ENCODE measurements at regions of chr7 and their contacts with region 1.

Region 1: DNA sequence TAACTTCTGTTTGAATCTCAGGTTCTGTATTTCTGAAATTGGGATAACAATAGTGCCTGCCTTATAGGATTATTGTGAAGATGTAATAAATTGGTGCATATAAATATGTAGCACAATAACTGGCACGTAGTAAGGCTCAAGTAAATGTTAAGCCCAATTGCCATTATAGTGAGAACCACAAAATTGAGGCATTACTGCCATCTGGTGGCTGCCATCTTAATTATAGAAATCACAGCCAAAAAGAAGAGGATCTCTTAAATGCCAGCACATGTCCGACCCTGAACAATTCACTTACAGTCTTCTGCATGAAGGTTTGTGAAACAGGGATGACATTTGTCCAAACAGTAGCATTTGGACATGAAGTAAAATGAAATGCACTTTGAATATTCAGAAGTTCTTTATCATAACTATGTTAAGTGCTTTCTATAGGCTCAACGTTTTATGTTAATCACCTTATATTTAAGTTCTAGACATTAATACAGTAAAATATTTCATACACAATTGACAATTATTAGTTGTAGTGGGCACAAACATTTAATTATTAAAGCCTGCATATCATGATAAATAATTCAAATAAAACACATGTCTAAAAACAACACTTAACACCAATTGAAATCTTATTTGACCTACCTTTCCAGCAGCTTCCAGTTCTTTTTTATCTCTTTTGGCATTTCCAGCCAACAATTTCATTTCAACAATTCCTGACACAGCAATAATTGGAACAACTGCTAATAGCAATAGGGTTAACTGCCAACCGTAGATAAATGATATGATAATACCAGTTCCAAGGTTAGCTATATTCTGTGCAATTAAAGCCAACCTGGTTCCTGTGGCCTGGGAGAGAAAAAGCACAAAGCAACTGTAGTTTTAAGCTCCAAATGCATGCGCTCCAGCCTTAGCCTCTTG is 58.5 kb downstream of the ABCB4 start:
- DNase-seq: peak in 4 of 10 donors; percentile 29 to 75 (median 60)
- H3K4me3 ChIP-seq: no peak overlapping the region
- H3K27ac ChIP-seq: no peak overlapping the region
- H3K27me3 ChIP-seq: no peaks in the 10 kb centered on the region
- CTCF ChIP-seq: peak; percentile 68 to 98 (median 82)

Region 2: DNA sequence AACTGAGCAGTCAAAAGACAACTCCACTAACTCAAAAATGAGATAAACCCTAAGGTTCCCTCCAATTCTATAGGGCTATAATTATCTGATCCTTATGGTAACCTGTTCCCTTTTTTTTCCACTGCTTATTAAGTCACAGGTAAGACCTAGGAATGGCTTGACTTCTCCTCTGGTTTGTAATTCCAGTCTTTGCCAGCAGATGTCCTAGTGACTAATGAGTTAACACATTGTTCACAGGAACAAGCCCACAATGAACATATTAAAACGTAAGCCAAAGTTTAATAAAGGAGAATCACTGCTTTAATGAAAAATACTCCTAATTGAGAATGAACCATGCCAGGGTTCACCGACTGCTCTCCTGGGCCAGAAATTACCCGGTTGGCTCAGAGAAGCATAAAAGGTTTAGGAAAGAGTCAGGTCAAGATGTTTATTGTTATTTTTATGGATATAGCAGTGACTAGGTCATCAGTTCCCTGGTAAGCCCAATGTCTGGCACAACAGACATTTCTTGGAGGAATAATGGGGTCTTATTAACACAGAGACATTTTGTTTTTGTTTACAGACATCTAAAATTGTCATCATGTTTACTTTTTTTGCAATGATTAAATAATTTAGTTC is 477.6 kb before region 1 on chr7:
- intact Hi-C with region 1: loop called in 1 of 2 experiments (anchors 10 kb)
- DNase-seq: peak in 2 of 10 donors; percentile 7 to 55
- H3K4me3 ChIP-seq: peak overlapping the region in 2 of 59 donors; percentile 15 to 21
- H3K27ac ChIP-seq: peak overlapping the region in 34 of 59 donors; percentile 3 to 91 (median 44)
- H3K27me3 ChIP-seq: no peaks in the 10 kb centered on the region
- CTCF ChIP-seq: peak; percentile 43 to 90 (median 80)

Region 3: GRCh38 chr7:87312215-87312865 is 104.6 kb before region 1 on chr7:
- intact Hi-C with region 1: loop called (anchors 1 to 2 kb)
- DNase-seq: peak in 8 of 10 donors; percentile 38 to 80 (median 56)
- H3K4me3 ChIP-seq: no peak overlapping the region
- H3K27ac ChIP-seq: no peak overlapping the region
- H3K27me3 ChIP-seq: no peaks in the 10 kb centered on the region
- CTCF ChIP-seq: peak in 54 of 56 donors; percentile 71 to 100 (median 98)